ENCODE measurements at regions of chr1 and their contacts with region 1.

Region 1: GRCh38 chr1:41432481-41433280 is 51.8 kb downstream of the EDN2 start:
- DNase-seq: peak; percentile 51
- H3K4me3 Mint-ChIP-seq: no peak overlapping the region
- H3K27ac Mint-ChIP-seq: no peak overlapping the region
- H3K4me1 Mint-ChIP-seq: no peaks in the 10 kb centered on the region
- H3K27me3 Mint-ChIP-seq: peaks cover 15% of the 10 kb centered on the region

Region 2: DNA sequence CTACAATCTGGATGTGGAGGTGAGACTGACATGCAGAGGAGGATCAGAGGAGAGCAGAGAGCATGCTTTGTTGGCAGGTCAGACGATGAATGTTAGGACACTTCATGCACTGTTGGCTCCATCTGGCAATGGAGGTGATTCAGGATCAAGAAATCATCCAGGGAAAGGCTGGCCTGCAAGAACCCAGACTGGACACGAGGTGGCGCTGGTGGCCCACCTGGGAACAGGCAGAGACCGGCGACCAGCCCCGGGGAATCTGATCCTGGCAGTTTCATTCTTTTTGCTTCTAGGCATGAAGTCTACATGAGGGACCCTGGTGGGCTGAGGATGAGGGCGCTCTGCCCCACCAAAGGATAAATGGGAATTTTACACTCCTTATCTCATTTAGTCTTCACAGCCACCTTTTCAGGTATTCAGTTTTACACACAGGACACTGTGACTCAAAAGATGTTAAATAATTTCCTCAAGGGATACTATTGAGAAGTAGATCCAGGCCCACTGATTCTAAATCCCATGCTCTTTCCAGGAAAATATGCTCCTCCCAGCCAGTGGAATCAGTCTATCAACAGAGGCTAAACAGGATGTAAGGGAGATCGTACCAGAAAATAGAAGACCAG is 164.4 kb before region 1 on chr1:
- intact Hi-C with region 1: loop called (anchors 1 kb)
- DNase-seq: peak; percentile 36
- H3K4me3 Mint-ChIP-seq: no peak overlapping the region
- H3K27ac Mint-ChIP-seq: no peak overlapping the region
- H3K4me1 Mint-ChIP-seq: peaks cover 7% of the 10 kb centered on the region
- H3K27me3 Mint-ChIP-seq: peaks cover 16% of the 10 kb centered on the region

Region 3: GRCh38 chr1:41282679-41283317 is 149.9 kb before region 1 on chr1:
- intact Hi-C with region 1: loop called (anchors 5 kb)
- DNase-seq: no peak
- H3K4me3 Mint-ChIP-seq: no peak overlapping the region
- H3K27ac Mint-ChIP-seq: no peak overlapping the region
- H3K4me1 Mint-ChIP-seq: no peaks in the 10 kb centered on the region
- H3K27me3 Mint-ChIP-seq: peaks cover 16% of the 10 kb centered on the region